Heart right ventricle (tissue), 16 donors: ENCODE measurements at regions of chr15 and their contacts with region 1.

Region 1: DNA sequence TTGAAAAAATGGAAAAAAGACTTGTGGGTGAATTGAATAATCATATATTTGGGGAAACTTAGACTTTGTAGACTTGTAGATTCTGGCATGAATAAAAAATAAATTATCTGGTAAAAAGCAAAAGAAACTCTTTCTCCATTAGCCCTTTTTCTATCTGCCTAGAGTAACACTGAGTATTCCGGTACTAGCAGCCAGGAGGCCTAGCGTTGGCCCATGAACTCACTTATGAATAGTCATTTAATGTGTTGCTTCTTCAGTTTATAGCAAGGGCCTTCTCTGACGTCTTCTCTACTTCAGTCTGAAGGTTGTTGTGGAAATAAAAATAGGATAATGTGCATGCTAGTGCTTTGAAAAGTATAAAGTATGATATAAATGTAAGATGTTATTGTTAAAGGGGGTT is 851.2 kb upstream of the NR2F2 start:
- DNase-seq: no peak
- ATAC-seq: no peak
- H3K4me3 ChIP-seq: peak overlapping the region in 1 of 10 donors; percentile 2
- H3K27ac ChIP-seq: peak overlapping the region in 1 of 10 donors; percentile 5
- H3K4me1 ChIP-seq: no peaks in the 10 kb centered on the region
- H3K27me3 ChIP-seq: no peaks in the 10 kb centered on the region
- CTCF ChIP-seq: no peak

Region 2: GRCh38 chr15:95091444-95091843 is 387.9 kb before region 1 on chr15:
- intact Hi-C with region 1: no loop called
- DNase-seq: no peak
- ATAC-seq: no peak
- H3K4me3 ChIP-seq: no peak overlapping the region
- H3K27ac ChIP-seq: no peak overlapping the region
- H3K4me1 ChIP-seq: peaks cover 0 to 5% (median 0%) of the 10 kb centered on the region in 9 donors
- H3K27me3 ChIP-seq: no peaks in the 10 kb centered on the region
- CTCF ChIP-seq: no peak

Region 3: DNA sequence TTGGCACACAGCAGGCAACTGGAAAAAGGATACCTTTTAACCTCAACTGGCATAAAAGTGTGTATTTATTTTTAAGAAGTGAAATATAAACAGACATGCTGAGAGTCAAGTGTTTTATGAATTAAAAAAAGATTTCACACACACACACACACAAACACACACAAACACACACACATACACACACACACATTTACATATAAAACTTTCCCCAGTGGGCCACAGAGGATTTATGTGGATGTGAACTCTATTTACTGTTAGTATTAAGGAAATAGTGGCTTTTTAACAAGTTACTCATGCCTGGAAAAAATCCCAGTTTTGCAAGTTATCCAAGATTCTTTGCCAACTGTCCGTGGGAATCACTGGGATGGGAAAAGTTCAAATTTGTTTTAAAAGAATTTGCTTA is 125.3 kb after region 1 on chr15:
- intact Hi-C with region 1: loop called in 1 of 10 experiments (anchors 5 kb)
- DNase-seq: peak in 1 of 2 donors; percentile 61
- ATAC-seq: peak in 7 of 8 donors; percentile 47 to 89 (median 72)
- H3K4me3 ChIP-seq: no peak overlapping the region
- H3K27ac ChIP-seq: peak overlapping the region in 8 of 10 donors; percentile 3 to 73 (median 60)
- H3K4me1 ChIP-seq: peaks cover 0 to 28% (median 15%) of the 10 kb centered on the region in 9 donors
- H3K27me3 ChIP-seq: no peaks in the 10 kb centered on the region
- CTCF ChIP-seq: no peak